ENCODE measurements at regions of chr12 and their contacts with region 1.

Region 1: GRCh38 chr12:123905319-123905925 is 67.2 kb downstream of the CCDC92 start:
- DNase-seq: peak in 3 of 6 donors; percentile 28 to 68 (median 31)
- ATAC-seq: peak; percentile 46 to 90 (median 76)
- H3K4me3 ChIP-seq: no peak overlapping the region
- H3K27ac ChIP-seq: no peak overlapping the region
- H3K4me1 ChIP-seq: no peaks in the 10 kb centered on the region
- H3K27me3 ChIP-seq: no peaks in the 10 kb centered on the region
- CTCF ChIP-seq: peak; percentile 66 to 84 (median 70)

Region 2: GRCh38 chr12:123983822-123984485 is 78.5 kb after region 1 on chr12:
- intact Hi-C with region 1: loop called in 2 of 3 experiments (anchors 5 to 10 kb)
- DNase-seq: peak in 2 of 6 donors; percentile 27 to 55
- ATAC-seq: peak; percentile 76 to 90 (median 89)
- H3K4me3 ChIP-seq: no peak overlapping the region
- H3K27ac ChIP-seq: no peak overlapping the region
- H3K4me1 ChIP-seq: peaks cover 0 to 11% (median 11%) of the 10 kb centered on the region in 3 donors
- H3K27me3 ChIP-seq: no peaks in the 10 kb centered on the region
- CTCF ChIP-seq: peak in 3 of 4 donors; percentile 38 to 43 (median 40)

Region 3: GRCh38 chr12:124026755-124027745 is 121.6 kb after region 1 on chr12:
- intact Hi-C with region 1: loop called in 1 of 3 experiments (anchors 10 kb)
- DNase-seq: no peak
- ATAC-seq: no peak
- H3K4me3 ChIP-seq: no peak overlapping the region
- H3K27ac ChIP-seq: no peak overlapping the region
- H3K4me1 ChIP-seq: no peaks in the 10 kb centered on the region
- H3K27me3 ChIP-seq: no peaks in the 10 kb centered on the region
- CTCF ChIP-seq: no peak

Region 4: DNA sequence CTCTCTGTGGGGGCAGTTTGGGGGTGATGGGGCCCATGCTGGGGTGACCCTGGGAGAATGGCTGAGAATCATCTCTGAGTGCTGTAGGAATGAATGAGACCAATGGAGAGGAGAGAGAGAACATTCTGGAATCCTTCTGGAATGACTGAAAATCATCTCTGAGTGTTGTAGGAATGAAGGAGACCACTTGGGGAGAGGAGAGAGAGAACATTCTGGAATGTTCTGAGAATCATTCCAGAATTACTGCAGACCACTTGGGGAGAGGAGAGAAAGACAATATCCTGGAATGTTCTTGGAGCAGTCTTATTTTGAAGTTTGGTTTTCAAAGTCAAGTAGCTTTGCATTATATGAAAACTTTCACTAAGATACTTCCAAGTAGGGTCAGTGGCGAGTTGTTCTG is 131.9 kb after region 1 on chr12:
- intact Hi-C with region 1: no loop called
- DNase-seq: no peak
- ATAC-seq: no peak
- H3K4me3 ChIP-seq: no peak overlapping the region
- H3K27ac ChIP-seq: no peak overlapping the region
- H3K4me1 ChIP-seq: peaks cover 0 to 9% (median 0%) of the 10 kb centered on the region in 3 donors
- H3K27me3 ChIP-seq: no peaks in the 10 kb centered on the region
- CTCF ChIP-seq: no peak

Measured in pancreas (tissue), 10 donors.